Activated CD8-positive, alpha-beta memory T cell treated with anti-CD3 and anti-CD28 coated beads, Interleukin-2, amount 10 ng/mL, durations not matched to agents 7 days and 5 days (primary cell): ENCODE measurements at regions of chr7 and their contacts with region 1.

Region 1: GRCh38 chr7:99990460-99990852 is 14.6 kb upstream of the AZGP1 start:
- DNase-seq: no peak
- ATAC-seq: peak; percentile 7
- H3K4me3 Mint-ChIP-seq: no peak overlapping the region
- H3K27ac Mint-ChIP-seq: no peak overlapping the region
- H3K4me1 Mint-ChIP-seq: peaks cover 12% of the 10 kb centered on the region
- H3K27me3 Mint-ChIP-seq: peaks cover 21% of the 10 kb centered on the region

Region 2: DNA sequence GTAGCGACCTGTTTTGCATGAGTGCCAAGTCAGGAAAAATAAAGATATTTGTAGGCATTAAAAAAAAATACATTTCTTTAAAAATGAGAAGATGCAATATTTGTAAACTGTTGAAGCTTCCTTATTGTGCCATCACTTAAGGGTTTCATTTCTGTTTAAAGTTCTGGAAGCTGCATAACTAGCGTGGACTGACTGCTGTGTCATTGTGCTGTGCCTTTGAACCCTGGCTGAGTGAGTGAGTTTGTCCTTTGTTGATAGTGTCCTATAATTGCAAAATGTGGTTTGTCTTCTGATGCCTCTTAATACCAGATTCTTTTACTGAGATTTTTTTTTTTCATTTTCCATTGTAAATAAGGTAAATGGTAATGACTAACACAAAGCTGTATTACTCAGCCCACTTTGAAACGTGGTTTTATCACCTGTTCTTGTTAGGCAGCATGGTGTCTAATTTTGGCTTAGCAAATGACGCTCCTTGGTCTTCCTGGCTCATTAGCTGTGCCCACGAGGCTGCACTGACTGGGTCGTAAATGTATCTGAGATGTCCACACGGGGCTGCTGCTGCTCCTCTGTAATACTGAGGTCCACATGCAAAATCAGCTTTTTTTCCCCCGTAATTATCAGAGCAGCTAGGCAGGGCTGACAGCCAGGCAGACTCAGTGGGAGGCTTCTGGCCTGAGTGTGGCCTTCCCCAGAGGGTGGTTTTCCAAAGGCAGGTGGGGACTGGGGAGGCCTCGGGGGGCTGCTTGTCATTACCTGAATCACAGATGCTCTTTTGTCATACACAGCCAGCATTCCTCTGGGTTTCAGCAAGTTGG is 359.0 kb before region 1 on chr7:
- CTCF ChIA-PET with region 1: no interaction called
- DNase-seq: no peak
- ATAC-seq: peak; percentile 60
- H3K4me3 Mint-ChIP-seq: no peak overlapping the region
- H3K27ac Mint-ChIP-seq: peak overlapping the region; percentile 71
- H3K4me1 Mint-ChIP-seq: peaks cover 21% of the 10 kb centered on the region
- H3K27me3 Mint-ChIP-seq: no peaks in the 10 kb centered on the region

Region 3: GRCh38 chr7:99910976-99911375 is 79.5 kb before region 1 on chr7:
- CTCF ChIA-PET with region 1: interaction called, 156 read pairs
- DNase-seq: no peak
- ATAC-seq: no peak
- H3K4me3 Mint-ChIP-seq: no peak overlapping the region
- H3K27ac Mint-ChIP-seq: no peak overlapping the region
- H3K4me1 Mint-ChIP-seq: peaks cover 27% of the 10 kb centered on the region
- H3K27me3 Mint-ChIP-seq: no peaks in the 10 kb centered on the region

Region 4: DNA sequence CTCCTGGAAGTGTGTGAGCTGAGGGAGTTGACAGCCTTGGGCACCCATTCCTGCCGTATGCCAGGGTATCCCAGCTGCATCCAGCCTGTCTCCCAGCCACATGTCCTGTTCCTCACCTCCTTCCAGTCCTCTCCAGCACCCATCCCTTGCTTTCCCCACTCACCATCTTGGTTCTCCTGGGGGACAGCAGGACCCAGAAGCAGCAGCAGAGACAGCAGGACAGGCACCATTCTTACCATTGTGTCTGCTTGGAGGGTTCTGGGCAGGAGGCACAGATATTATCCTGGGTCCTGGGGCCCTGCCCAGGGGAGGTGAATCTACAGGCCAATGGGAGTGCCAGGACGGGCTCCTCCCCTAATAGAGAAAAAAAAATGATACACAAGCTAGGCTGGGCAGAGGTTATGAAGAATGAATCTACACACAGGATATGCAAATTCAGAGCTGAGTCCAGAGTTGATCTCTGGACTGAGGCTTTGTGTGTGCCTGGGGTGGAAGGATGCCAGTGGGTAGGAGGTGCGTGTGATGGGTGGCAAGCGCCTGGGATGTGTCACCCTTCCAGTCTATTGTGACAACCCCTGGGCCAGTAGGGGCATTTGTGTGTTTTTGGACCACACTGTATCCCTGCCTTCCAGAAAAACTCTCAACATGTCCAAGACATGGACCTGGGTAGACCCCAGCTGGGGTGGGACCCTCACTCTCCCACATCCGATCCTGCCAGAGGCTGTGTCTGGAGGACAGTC is 14.5 kb before region 1 on chr7 and contains the start of gene AZGP1:
- CTCF ChIA-PET with region 1: interaction called, 39 read pairs
- DNase-seq: no peak
- ATAC-seq: no peak
- H3K4me3 Mint-ChIP-seq: no peak within 1 kb of the TSS
- H3K27ac Mint-ChIP-seq: no peak within 1 kb of the TSS
- H3K4me1 Mint-ChIP-seq: no peaks in the 10 kb centered on the region
- H3K27me3 Mint-ChIP-seq: peaks cover 29% of the 10 kb centered on the region
- total RNA-seq, gene AZGP1: not detected

Region 5: DNA sequence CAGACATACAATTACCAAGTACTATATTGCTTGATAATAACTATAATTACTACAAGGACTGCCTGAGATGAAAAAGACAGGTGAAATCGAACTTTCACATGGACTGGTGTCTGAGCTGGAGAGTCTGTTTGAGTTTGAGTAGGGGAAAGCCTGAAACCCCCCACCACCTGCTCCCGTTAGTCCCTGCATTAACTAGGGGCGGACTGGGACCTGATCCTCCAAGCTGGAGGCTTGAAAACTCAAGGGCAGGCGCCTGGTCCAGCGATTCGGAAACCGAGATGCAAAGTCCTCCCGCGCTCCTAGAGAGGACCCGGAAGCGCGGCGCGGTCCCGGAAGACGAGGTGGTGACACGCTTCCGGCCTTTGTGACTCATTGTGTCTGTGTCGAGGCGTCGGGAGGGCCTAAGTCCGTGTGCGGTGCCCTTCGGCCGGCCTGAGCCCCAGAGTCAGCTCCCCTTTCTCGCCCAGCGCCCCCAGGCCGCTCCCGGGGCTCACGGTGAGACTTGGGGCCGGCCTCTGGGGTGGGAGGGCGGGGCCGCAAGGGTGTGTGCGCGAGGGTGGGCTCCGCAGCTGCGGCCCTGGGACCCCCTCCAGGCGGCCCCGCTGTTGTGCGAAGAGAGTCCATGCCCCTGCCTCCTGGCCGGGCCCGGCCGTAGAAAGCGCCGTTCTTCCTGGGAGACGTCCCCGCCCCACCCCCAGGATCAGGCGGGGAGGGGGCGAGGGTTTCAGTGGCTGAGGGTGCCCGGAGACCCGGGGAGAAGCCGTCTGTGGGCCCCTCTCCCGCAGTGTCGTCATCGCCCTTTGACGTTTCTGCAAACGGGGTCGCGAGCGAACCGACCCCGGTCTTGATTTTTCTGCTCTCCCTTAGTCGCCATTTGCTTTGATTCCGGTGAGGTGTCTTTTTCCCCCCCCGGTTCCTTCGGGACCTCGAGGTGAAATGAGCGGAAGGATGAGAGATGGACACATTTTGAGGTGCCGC is 25.1 kb after region 1 on chr7 and contains the start of gene ZKSCAN1:
- CTCF ChIA-PET with region 1: interaction called, 35 read pairs
- DNase-seq: peak; percentile 91
- ATAC-seq: peak; percentile 98
- H3K4me3 Mint-ChIP-seq: peak within 1 kb of the TSS; percentile 92
- H3K27ac Mint-ChIP-seq: peak within 1 kb of the TSS; percentile 96
- H3K4me1 Mint-ChIP-seq: peaks cover 44% of the 10 kb centered on the region
- H3K27me3 Mint-ChIP-seq: no peaks in the 10 kb centered on the region
- total RNA-seq, gene ZKSCAN1: 55.5 to 58.6 TPM

Region 6: DNA sequence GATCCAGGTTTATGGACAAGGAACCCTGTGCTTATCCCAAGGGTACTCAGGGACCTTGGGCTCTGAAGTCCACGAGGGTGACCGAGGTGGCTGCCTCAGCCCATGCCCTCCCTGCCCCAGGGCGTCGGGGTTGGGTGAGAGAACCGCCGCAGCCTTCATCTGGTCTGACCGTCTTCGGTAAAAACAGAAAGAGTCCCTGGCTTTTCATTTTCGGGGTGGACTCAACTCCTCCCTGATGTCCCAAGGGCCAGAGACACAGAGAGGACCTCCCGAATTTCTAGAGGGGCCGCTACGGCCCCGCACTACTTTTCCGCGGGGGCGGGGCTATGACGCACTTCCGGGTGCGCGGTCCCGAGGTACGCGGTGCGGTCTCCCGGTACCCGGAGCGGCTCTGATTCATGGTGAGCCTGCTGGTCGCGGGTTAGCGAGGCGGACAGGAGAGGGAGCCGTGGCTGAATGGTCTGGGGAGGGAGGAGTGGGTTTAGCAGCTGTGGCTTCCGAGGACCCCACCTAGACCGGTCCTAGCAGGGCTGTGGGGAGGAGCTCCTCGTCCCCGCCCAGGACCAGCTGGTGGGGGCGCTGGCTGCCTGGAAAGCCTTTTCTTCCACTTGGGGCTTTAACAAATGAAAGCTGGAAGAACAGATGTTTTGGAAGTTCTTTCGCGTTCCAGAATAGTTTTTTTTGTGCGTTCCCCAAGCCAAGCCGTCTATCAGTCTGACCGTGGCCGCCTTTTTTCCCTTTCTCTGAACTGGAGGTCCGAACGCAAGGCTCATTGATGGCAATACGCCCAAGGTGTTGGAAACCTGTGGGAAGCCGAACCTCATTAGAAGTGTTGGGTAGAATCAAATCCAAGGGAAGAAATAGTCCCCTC is 59.2 kb after region 1 on chr7 and contains the start of gene ZSCAN21:
- CTCF ChIA-PET with region 1: interaction called, 82 read pairs
- DNase-seq: peak; percentile 82
- ATAC-seq: peak; percentile 91
- H3K4me3 Mint-ChIP-seq: peak within 1 kb of the TSS; percentile 92
- H3K27ac Mint-ChIP-seq: peak within 1 kb of the TSS; percentile 93
- H3K4me1 Mint-ChIP-seq: peaks cover 20% of the 10 kb centered on the region
- H3K27me3 Mint-ChIP-seq: no peaks in the 10 kb centered on the region
- total RNA-seq, gene ZSCAN21: 5.6 to 7.9 TPM